ENCODE measurements at regions of chr4 and their contacts with region 1.

Region 1: GRCh38 chr4:138680989-138681604 is 334.5 kb upstream of the NOCT start:
- DNase-seq: peak; percentile 11 to 58
- ATAC-seq: peak; percentile 70 to 90; a peak in 4 of 6 replicates
- H3K4me3 ChIP-seq: no peak overlapping the region
- H3K27ac ChIP-seq: no peak overlapping the region
- H3K4me1 ChIP-seq: peaks cover 10% of the 10 kb centered on the region; the same call in 2 of the 3 replicates
- CTCF ChIP-seq: peak; percentile 82
- EP300 ChIP-seq: no peak
- POLR2A ChIP-seq: no peak
- RAD21 ChIP-seq: peak; percentile 86 to 91

Region 2: DNA sequence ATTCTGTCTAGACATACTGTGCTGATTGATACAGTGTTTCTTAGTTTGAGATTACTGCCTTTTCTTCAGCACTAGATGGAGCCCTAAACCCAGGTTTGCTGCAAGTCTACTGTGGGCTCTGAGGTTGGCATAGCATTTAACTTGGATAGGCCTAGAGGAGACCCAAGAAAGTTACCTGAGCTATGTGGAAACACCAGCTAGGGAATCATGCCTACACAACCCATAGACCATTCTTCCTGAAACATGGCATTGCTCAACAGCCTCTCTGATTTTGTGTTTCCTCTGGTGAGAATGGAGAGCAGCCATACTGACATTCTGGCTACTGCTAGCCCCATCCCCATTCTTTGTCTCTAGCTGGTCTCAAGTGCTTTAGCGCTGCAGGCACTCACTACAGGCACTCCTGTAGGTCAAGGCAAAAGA is 861.1 kb before region 1 on chr4:
- CTCF ChIA-PET with region 1: interaction called, 22 read pairs
- POLR2A ChIA-PET with region 1: no interaction called
- DNase-seq: peak; percentile 1 to 53
- ATAC-seq: peak; percentile 89 to 96
- H3K4me3 ChIP-seq: no peak overlapping the region
- H3K27ac ChIP-seq: no peak overlapping the region
- H3K4me1 ChIP-seq: no peaks in the 10 kb centered on the region
- CTCF ChIP-seq: peak; percentile 69
- EP300 ChIP-seq: no peak
- POLR2A ChIP-seq: no peak
- RAD21 ChIP-seq: peak; percentile 78 to 83

Region 3: GRCh38 chr4:138090150-138090917 is 590.8 kb before region 1 on chr4:
- CTCF ChIA-PET with region 1: interaction called, 16 read pairs
- POLR2A ChIA-PET with region 1: no interaction called
- DNase-seq: peak; percentile 68 to 70
- ATAC-seq: peak; percentile 89 to 98
- H3K4me3 ChIP-seq: peak overlapping the region; percentile 29; the same call in 1 of the 3 replicates
- H3K27ac ChIP-seq: peak overlapping the region in 1 of 2 experiments; percentile 41; a peak in 1 of 6 replicates
- H3K4me1 ChIP-seq: no peaks in the 10 kb centered on the region
- CTCF ChIP-seq: peak; percentile 75
- EP300 ChIP-seq: no peak
- POLR2A ChIP-seq: no peak
- RAD21 ChIP-seq: peak; percentile 82

Region 4: DNA sequence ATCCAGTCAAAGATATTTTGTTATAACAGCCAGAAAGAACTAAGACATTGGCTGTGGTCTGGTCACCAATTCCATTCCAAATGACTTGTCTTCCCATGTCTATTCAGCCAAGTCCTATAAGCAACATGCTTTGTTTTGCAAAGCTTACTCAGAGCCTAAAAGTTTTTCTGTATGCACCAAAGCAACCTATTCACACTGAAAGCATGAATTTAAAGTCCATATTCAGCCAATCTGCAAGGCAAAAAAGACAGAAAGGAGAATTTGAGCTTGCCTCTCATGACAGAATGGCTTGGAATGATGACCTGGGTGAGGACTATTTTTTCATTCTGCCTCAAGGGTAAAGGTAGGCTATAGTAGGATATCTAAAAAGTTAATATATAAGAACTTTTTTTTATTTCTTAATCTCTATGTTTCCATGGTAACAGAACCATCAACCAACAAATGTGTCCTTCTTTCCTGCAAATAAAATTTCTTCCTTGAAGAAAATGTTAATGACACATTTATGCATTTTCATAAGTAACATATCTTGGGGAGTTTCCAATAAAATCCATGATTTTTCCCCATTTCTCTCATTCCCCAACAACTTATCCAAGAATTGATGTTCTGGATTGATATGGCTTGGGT is 11.4 kb after region 1 on chr4:
- CTCF ChIA-PET with region 1: interaction called, 17 read pairs
- POLR2A ChIA-PET with region 1: no interaction called
- DNase-seq: no peak
- ATAC-seq: no peak
- H3K4me3 ChIP-seq: no peak overlapping the region
- H3K27ac ChIP-seq: no peak overlapping the region
- H3K4me1 ChIP-seq: no peaks in the 10 kb centered on the region
- CTCF ChIP-seq: no peak
- EP300 ChIP-seq: no peak
- POLR2A ChIP-seq: no peak
- RAD21 ChIP-seq: no peak